Heart right ventricle (tissue), 16 donors: ENCODE measurements at regions of chr19 and their contacts with region 1.

Region 1: GRCh38 chr19:19053508-19054314 is 10.1 kb upstream of the SLC25A42 start:
- DNase-seq: peak; percentile 50 to 71
- ATAC-seq: peak; percentile 46 to 86 (median 73)
- H3K4me3 ChIP-seq: no peak overlapping the region
- H3K27ac ChIP-seq: no peak overlapping the region
- H3K4me1 ChIP-seq: no peaks in the 10 kb centered on the region
- H3K27me3 ChIP-seq: no peaks in the 10 kb centered on the region
- CTCF ChIP-seq: peak; percentile 69 to 78 (median 72)

Region 2: GRCh38 chr19:19105365-19106055 is 51.8 kb after region 1 on chr19:
- intact Hi-C with region 1: loop called in 1 of 10 experiments (anchors 10 kb)
- DNase-seq: peak; percentile 52 to 58
- ATAC-seq: peak; percentile 39 to 86 (median 71)
- H3K4me3 ChIP-seq: peak overlapping the region in 8 of 10 donors; percentile 21 to 45 (median 42)
- H3K27ac ChIP-seq: peak overlapping the region in 1 of 10 donors; percentile 44
- H3K4me1 ChIP-seq: peaks cover 0 to 19% (median 0%) of the 10 kb centered on the region in 9 donors
- H3K27me3 ChIP-seq: no peaks in the 10 kb centered on the region
- CTCF ChIP-seq: no peak

Region 3: DNA sequence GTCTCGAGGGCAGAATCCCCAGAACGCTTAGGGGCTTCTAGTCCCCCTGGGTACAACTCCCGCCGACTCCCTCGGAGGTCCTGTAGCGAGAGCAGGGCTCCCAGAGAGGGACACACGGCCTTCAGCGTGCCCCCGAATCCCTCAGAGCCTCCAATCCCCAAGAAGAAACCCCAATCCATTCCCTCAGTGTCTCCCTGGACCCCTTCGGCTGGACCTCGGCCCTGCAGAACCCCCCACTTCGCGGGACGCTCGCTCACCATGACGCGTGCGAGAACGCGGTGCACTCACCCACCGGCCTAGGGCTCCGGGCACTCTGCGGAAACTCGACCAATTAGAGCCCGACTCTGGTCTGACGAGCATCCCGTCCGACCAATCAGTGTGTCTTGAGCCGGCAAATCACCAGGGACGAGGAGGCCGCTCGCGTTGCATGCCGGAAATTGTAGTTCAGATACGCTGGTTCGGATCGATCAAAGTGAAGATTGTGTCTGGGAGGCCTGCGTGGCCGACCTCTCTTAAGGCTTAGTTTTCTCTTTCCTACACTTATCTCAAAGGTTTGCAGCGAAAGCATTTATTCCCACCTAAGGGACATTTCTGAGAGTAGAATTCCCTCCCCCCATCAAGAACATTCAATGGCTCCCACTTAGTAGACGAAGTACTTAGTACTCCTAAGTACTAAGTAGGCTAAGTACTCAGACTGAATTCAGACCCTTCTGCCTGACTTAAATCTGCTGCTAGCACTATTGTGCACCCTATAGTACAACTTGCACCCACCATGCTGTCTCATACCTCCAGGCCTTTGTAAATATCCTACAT is 84.7 kb after region 1 on chr19 and contains the start of gene TMEM161A:
- intact Hi-C with region 1: loop called (anchors 1 to 10 kb)
- DNase-seq: peak; percentile 97 to 99
- ATAC-seq: peak; percentile 96 to 100 (median 98)
- H3K4me3 ChIP-seq: peak within 1 kb of the TSS; percentile 32 to 85 (median 76)
- H3K27ac ChIP-seq: peak within 1 kb of the TSS in 9 of 10 donors; percentile 1 to 88 (median 85)
- H3K4me1 ChIP-seq: peaks cover 4 to 25% (median 15%) of the 10 kb centered on the region in 9 donors
- H3K27me3 ChIP-seq: no peaks in the 10 kb centered on the region
- CTCF ChIP-seq: no peak
- total RNA-seq, gene TMEM161A: 11.4 to 27.9 (median 18.6) TPM

Region 4: DNA sequence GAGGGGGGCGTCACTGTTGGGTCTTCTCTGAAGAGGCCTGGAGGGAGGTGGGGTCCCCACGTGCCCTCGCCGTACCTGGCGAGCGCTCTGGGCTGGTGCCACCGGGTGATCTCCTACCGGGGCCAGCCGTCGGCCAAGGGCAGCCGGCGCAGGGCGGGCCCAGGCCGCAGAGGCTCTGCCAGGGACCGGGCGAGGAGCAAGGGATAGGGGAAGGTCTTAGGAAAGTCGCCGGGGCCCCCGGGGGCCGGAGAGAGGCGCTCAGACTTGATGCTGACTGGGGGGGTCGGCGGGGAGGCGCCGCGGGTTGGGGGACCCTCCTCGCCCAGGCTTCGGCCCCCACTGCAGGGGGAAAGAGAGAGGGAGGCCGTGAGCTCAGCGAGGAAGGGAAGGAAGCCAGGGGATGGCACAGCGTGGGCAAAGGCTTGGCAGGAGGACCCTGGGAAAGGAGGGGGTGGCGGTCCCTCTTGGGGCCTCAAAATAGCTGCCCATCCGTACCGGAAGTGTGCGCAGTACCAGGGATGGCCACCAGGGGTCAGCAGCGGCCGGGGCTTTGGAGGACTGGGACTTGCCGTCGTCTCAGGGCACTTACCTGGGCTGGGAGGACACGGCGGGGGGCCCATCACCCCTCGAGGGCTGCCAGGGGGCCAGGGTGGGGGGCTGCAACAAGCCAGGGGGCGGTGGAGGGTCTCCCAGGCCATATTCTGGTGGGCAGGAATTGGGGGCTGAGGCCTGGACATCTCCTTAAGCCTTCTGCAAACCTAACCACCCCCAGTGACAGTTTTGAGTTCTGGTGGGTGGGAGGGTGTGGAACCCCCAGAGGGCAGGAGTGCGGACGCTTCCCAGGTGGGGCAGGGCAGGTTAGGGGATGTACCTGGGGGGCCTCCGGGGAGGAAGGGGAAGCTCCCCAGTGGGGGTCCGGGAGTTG is 92.2 kb after region 1 on chr19:
- intact Hi-C with region 1: loop called in 4 of 10 experiments (anchors 2 to 10 kb)
- DNase-seq: peak; percentile 76 to 83
- ATAC-seq: peak; percentile 65 to 84 (median 76)
- H3K4me3 ChIP-seq: peak overlapping the region in 6 of 10 donors; percentile 10 to 37 (median 27)
- H3K27ac ChIP-seq: peak overlapping the region in 5 of 10 donors; percentile 12 to 65 (median 31)
- H3K4me1 ChIP-seq: peaks cover 0 to 9% (median 4%) of the 10 kb centered on the region in 9 donors
- H3K27me3 ChIP-seq: no peaks in the 10 kb centered on the region
- CTCF ChIP-seq: peak; percentile 88 to 93 (median 91)

Region 5: GRCh38 chr19:19169236-19170052 is 115.7 kb after region 1 on chr19:
- intact Hi-C with region 1: no loop called
- DNase-seq: no peak
- ATAC-seq: no peak
- H3K4me3 ChIP-seq: peak overlapping the region in 7 of 10 donors; percentile 16 to 48 (median 42)
- H3K27ac ChIP-seq: no peak overlapping the region
- H3K4me1 ChIP-seq: peaks cover 0 to 31% (median 10%) of the 10 kb centered on the region in 9 donors
- H3K27me3 ChIP-seq: no peaks in the 10 kb centered on the region
- CTCF ChIP-seq: no peak

Region 6: GRCh38 chr19:19179548-19180441 is 126.1 kb after region 1 on chr19:
- intact Hi-C with region 1: loop called in 1 of 10 experiments (anchors 5 kb)
- DNase-seq: no peak
- ATAC-seq: no peak
- H3K4me3 ChIP-seq: no peak overlapping the region
- H3K27ac ChIP-seq: no peak overlapping the region
- H3K4me1 ChIP-seq: peaks cover 0 to 1% (median 0%) of the 10 kb centered on the region in 9 donors
- H3K27me3 ChIP-seq: no peaks in the 10 kb centered on the region
- CTCF ChIP-seq: no peak